Dendritic cell treated with granulocyte-macrophage colony-stimulating factor and Interleukin-4, amounts not matched to agents 40 ng/mL and 50 ng/mL, for 4 days (primary cell): ENCODE measurements at regions of chr1 and their contacts with region 1.

Region 1: GRCh38 chr1:186212544-186213226 is 162.4 kb downstream of the TPR start:
- H3K4me3 Mint-ChIP-seq: no peak overlapping the region
- H3K27ac Mint-ChIP-seq: no peak overlapping the region
- H3K4me1 Mint-ChIP-seq: no peaks in the 10 kb centered on the region
- H3K27me3 Mint-ChIP-seq: no peaks in the 10 kb centered on the region

Region 2: DNA sequence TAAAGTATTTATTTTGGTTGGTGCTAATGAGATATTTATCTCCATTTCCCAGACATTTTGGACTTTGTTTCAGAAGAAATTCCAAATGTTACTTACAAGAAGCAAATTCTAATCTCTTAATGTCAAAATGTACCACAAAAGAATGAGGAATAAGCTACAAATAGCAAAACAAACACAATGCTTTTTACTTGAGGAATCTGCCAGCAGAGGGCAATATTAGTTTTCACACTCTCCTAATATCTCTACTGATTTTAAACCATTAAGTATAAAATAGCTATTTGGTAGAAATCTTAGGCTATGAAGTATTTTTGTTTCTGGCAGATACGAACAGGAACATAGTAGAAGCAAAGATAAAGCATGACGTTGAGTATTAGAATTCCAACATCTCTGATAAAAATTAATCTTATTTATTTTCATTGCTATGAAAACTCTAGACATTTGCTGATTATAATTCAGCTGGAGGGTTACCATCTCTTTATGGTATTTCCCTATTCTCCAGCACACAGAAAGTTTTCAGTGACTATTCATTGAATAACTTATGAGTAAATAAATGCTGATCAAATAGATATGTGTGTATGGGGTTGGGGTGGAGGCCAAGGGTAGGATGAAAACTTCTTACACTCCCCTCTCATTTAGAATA is 491.9 kb before region 1 on chr1:
- intact Hi-C with region 1: loop called (anchors 1 kb)
- H3K4me3 Mint-ChIP-seq: no peak overlapping the region
- H3K27ac Mint-ChIP-seq: no peak overlapping the region
- H3K4me1 Mint-ChIP-seq: no peaks in the 10 kb centered on the region
- H3K27me3 Mint-ChIP-seq: peaks cover 10% of the 10 kb centered on the region

Region 3: GRCh38 chr1:185813401-185813979 is 399.2 kb before region 1 on chr1:
- intact Hi-C with region 1: loop called (anchors 1 kb)
- H3K4me3 Mint-ChIP-seq: no peak overlapping the region
- H3K27ac Mint-ChIP-seq: no peak overlapping the region
- H3K4me1 Mint-ChIP-seq: no peaks in the 10 kb centered on the region
- H3K27me3 Mint-ChIP-seq: no peaks in the 10 kb centered on the region

Region 4: DNA sequence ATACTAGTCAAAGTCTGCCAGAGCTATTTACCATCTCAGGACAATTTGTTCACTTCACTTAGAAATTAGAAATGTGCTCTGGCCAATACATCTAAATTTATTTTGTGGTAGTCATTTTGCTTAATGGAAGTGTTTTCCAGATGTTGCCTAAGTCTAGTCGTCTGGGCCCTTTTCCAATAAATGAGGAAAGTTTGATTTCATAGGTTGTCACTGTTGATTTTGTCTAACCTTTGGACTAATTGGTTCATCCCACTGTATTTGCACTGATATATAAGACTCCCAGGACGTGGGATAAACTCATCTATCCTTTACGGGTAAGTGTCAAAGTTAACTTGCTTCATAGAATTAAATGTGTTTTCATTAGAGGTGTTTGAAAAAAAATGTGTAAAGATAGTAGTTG is 83.3 kb after region 1 on chr1:
- intact Hi-C with region 1: no loop called
- H3K4me3 Mint-ChIP-seq: no peak within 1 kb of the TSS
- H3K27ac Mint-ChIP-seq: no peak within 1 kb of the TSS
- H3K4me1 Mint-ChIP-seq: no peaks in the 10 kb centered on the region
- H3K27me3 Mint-ChIP-seq: no peaks in the 10 kb centered on the region